ENCODE measurements at regions of chr4 and their contacts with region 1.

Region 1: GRCh38 chr4:110510955-110511544 is 35.1 kb downstream of the ENPEP start:
- DNase-seq: no peak
- H3K4me3 ChIP-seq: no peak overlapping the region
- H3K27ac ChIP-seq: no peak overlapping the region
- H3K27me3 ChIP-seq: no peaks in the 10 kb centered on the region
- CTCF ChIP-seq: peak; percentile 70 to 96 (median 86)

Region 2: GRCh38 chr4:109998867-109999584 is 512.0 kb before region 1 on chr4:
- intact Hi-C with region 1: loop called (anchors 2 to 5 kb)
- DNase-seq: no peak
- H3K4me3 ChIP-seq: no peak overlapping the region
- H3K27ac ChIP-seq: no peak overlapping the region
- H3K27me3 ChIP-seq: peaks cover 0 to 3% (median 0%) of the 10 kb centered on the region in 45 donors
- CTCF ChIP-seq: peak; percentile 49 to 96 (median 82)

Region 3: DNA sequence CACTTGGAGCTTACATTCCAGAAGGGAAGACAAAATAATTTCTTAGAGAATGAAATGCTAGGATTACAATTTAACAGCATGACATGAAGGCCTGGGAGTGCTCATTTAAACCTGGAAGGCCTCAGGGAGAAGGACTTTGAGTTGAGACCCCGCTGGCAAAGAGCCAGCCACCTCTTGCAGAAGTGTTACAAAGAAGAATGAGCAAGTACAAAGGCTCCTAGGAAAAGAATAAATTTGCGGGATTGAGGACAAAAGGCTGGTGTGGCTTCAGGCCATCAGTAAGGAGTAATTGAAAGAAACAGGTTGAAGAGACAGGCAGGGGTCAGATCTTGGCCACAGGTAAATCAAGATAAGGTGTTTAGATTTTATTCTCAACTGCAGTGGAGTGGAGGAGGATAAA is 309.5 kb before region 1 on chr4:
- intact Hi-C with region 1: loop called in 1 of 2 experiments (anchors 5 kb)
- DNase-seq: no peak
- H3K4me3 ChIP-seq: no peak overlapping the region
- H3K27ac ChIP-seq: no peak overlapping the region
- H3K27me3 ChIP-seq: no peaks in the 10 kb centered on the region
- CTCF ChIP-seq: no peak

Region 4: GRCh38 chr4:110310795-110311194 is 200.3 kb before region 1 on chr4:
- intact Hi-C with region 1: loop called in 1 of 2 experiments (anchors 10 kb)
- DNase-seq: no peak
- H3K4me3 ChIP-seq: no peak overlapping the region
- H3K27ac ChIP-seq: no peak overlapping the region
- H3K27me3 ChIP-seq: peaks cover 0 to 3% (median 0%) of the 10 kb centered on the region in 45 donors
- CTCF ChIP-seq: no peak